Activated CD8-positive, alpha-beta memory T cell treated with anti-CD3 and anti-CD28 coated beads, Interleukin-2, amount 10 ng/mL, durations not matched to agents 7 days and 5 days (primary cell): ENCODE measurements at regions of chr13 and their contacts with region 1.

Region 1: DNA sequence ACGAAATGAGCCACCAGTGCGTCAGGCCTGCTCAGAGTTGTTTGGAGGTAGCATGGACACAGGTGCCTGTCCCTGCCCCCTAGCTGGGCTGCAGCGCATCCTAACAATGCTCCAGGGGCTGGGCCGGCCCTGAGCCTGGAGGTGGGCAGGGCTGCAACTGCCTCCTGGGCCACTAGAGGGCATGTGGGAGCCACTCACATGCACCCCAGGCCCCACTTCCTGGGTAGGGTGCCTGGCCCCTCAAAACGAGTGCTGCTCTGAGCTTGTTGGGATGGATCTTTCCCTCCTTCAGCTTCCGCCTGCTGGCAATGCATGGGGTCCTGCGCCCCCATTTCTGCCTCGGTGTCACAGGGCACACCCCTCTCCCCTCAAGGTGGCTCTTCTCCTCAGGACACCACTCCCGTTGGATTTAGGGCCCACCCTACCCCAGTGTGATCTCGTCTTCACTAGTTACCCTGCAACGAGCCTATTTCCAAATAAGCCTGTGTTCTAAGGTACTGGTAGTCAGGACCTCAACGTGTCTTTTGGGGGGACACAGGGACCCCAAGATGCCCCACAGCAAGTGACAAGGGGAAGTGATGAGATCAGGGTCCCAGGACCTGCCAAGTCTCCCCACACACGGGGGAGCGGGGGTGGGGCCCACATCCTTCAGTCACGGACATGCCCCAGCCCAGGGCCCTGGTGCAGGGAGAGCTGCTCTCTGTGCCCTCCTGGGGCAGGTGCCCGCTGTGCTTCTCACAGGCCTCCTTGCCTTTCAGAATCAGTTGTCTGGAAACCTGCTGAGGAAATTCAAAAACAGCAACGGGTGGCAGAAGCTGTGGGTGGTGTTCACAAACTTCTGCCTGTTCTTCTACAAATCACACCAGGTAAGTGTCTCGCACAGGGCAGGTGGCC is 131.3 kb downstream of the STK24 start:
- DNase-seq: peak; percentile 84
- ATAC-seq: peak; percentile 94
- H3K4me3 Mint-ChIP-seq: no peak overlapping the region
- H3K27ac Mint-ChIP-seq: peak overlapping the region; percentile 84
- H3K4me1 Mint-ChIP-seq: peaks cover 15% of the 10 kb centered on the region
- H3K27me3 Mint-ChIP-seq: no peaks in the 10 kb centered on the region

Region 2: DNA sequence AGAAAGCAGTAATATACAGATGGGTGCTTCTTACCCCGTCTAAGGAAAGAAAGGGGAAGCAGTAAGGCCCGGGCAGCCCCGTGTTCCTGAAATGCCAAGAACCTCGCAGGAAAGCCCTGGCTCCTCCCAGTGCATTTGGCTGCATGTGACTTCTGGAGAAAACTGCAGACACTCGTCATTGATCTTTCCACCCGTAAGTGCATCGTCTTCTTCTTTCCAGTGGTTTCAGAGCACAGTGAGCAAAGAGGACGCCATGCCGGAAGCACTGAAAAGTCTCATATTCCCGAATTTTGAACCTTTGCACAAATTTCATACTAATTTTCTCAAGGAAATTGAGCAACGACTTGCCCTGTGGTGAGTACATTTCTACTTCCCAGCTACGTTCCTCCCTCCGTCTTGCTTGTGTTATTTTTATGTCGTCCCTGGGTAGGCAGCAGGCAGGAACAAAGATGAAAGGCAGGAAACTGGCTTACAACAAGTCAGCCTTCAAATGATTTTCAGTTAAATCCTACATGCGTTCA is 33.8 kb before region 1 on chr13:
- CTCF ChIA-PET with region 1: no interaction called
- DNase-seq: no peak
- ATAC-seq: no peak
- H3K4me3 Mint-ChIP-seq: peak overlapping the region; percentile 7
- H3K27ac Mint-ChIP-seq: no peak overlapping the region
- H3K4me1 Mint-ChIP-seq: peaks cover 3% of the 10 kb centered on the region
- H3K27me3 Mint-ChIP-seq: peaks cover 24% of the 10 kb centered on the region

Region 3: GRCh38 chr13:98466634-98467236 is 21.1 kb after region 1 on chr13:
- CTCF ChIA-PET with region 1: interaction called, 12 read pairs
- DNase-seq: no peak
- ATAC-seq: peak; percentile 61
- H3K4me3 Mint-ChIP-seq: no peak overlapping the region
- H3K27ac Mint-ChIP-seq: no peak overlapping the region
- H3K4me1 Mint-ChIP-seq: peaks cover 16% of the 10 kb centered on the region
- H3K27me3 Mint-ChIP-seq: no peaks in the 10 kb centered on the region

Region 4: DNA sequence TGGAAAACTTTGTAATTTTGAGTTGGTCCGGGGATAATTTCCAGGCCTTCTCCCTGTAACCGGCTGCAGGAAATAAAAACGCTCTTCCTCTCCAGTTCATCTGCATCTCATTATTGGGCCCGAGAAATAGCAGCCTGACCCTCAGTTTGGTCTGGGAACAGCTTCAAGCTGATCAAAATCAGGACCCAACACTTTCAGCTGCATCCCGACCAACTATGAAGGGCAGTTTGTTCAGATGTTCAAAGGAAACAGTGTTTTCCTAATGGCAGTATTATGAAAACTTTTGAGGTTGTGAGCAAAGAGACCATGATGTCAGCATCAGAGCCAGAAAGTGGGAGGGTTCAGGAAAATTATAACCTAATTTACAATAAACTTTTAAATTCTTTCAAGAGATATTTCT is 95.6 kb after region 1 on chr13:
- CTCF ChIA-PET with region 1: interaction called, 11 read pairs
- DNase-seq: no peak
- ATAC-seq: no peak
- H3K4me3 Mint-ChIP-seq: no peak overlapping the region
- H3K27ac Mint-ChIP-seq: no peak overlapping the region
- H3K4me1 Mint-ChIP-seq: peaks cover 71% of the 10 kb centered on the region
- H3K27me3 Mint-ChIP-seq: no peaks in the 10 kb centered on the region

Region 5: GRCh38 chr13:98570929-98571372 is 125.4 kb after region 1 on chr13:
- CTCF ChIA-PET with region 1: interaction called, 12 read pairs
- DNase-seq: peak; percentile 71
- ATAC-seq: peak; percentile 72
- H3K4me3 Mint-ChIP-seq: peak overlapping the region; percentile 80
- H3K27ac Mint-ChIP-seq: peak overlapping the region; percentile 93
- H3K4me1 Mint-ChIP-seq: peaks cover 86% of the 10 kb centered on the region
- H3K27me3 Mint-ChIP-seq: no peaks in the 10 kb centered on the region

Region 6: DNA sequence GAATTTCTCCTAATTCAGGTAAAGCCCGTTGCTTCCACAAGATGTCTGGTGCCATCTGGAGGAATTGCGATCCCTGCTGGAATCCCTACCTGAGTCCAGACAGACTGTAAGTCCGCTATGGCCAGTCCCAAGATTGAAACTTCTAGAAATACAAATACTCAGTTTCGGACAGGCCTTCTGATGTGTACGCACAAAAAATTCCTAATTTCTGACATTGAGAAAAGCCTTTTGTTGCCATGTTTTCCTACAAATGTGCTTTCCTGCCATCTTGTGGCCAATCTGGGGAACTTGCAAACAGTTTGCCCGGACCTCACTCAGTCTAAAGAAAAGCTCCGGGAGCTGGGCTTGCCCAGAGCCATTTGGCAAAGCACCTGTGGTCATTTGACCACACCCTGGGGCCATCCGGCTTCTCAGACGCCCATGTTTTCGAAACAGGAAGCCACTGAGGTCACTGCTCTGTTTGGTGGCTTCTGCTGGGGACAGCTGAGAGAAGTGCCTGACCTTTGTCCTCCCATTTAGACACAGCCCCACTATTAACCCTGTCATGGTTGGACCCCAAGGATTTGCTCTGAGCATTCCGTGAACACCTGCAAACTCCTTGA is 227.5 kb after region 1 on chr13:
- CTCF ChIA-PET with region 1: interaction called, 50 read pairs
- DNase-seq: peak; percentile 63
- ATAC-seq: peak; percentile 80
- H3K4me3 Mint-ChIP-seq: no peak overlapping the region
- H3K27ac Mint-ChIP-seq: no peak overlapping the region
- H3K4me1 Mint-ChIP-seq: peaks cover 12% of the 10 kb centered on the region
- H3K27me3 Mint-ChIP-seq: peaks cover 11% of the 10 kb centered on the region